ENCODE measurements at regions of chr4 and their contacts with region 1.

Region 1: GRCh38 chr4:130705023-130705422 is 1609.1 kb downstream of the C4orf33 start:
- DNase-seq: peak; percentile 8
- H3K27ac ChIP-seq: no peak overlapping the region
- CTCF ChIP-seq: no peak

Region 2: DNA sequence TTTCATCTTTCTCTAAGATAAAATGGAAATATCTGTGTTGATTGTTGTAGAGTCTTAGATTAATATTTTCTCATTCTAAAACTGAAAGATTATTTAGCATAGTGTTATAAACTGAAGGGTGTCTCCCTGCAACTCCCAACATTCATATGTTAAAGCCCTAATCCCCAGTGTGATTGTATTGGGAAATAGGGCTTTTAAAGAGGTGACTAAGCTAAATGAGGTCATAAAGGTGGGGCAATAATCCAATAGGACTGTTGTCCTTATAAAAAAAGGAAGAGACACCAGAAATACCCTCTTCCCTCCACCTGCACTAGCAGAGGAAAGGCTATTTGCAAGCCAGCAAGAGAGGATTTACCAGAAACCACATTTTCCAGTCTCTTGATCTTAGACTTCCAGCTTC is 17.3 kb after region 1 on chr4:
- CTCF ChIA-PET with region 1: no interaction called
- POLR2A ChIA-PET with region 1: no interaction called
- DNase-seq: peak; percentile 22
- H3K27ac ChIP-seq: no peak overlapping the region
- CTCF ChIP-seq: no peak

Region 3: DNA sequence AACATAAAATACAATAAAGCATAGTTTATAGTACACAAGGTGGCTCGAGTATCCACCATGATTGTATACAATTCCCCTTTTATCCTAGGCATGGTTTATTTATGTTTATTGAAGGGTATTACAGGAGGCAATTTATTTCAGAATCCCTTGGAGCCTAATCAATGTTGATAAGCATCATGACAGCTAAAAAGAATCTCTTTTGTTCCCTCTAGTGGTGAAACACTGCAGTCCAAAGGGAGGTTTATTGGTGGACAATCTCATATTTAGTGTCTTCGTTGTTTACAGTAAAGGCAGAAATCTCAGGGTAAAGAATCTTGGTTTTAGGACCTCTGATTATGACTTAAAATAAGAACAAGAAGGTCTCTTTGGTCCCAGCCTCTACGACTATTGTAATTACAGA is 103.5 kb after region 1 on chr4:
- CTCF ChIA-PET with region 1: interaction called, 13 read pairs
- POLR2A ChIA-PET with region 1: no interaction called
- DNase-seq: peak; percentile 15
- H3K27ac ChIP-seq: no peak overlapping the region
- CTCF ChIP-seq: peak; percentile 53

Measured in RWPE1 (cell line).